HEK293 (cell line): ENCODE measurements at regions of chr6 and their contacts with region 1.

Region 1: GRCh38 chr6:37018198-37019064 is 13.0 kb downstream of the FGD2 start:
- H3K4me3 ChIP-seq: no peak overlapping the region
- H3K27ac ChIP-seq: no peak overlapping the region
- H3K4me1 ChIP-seq: peaks cover 3% of the 10 kb centered on the region; the same call in 1 of the 2 replicates
- CTCF ChIP-seq: peak; percentile 76

Region 2: DNA sequence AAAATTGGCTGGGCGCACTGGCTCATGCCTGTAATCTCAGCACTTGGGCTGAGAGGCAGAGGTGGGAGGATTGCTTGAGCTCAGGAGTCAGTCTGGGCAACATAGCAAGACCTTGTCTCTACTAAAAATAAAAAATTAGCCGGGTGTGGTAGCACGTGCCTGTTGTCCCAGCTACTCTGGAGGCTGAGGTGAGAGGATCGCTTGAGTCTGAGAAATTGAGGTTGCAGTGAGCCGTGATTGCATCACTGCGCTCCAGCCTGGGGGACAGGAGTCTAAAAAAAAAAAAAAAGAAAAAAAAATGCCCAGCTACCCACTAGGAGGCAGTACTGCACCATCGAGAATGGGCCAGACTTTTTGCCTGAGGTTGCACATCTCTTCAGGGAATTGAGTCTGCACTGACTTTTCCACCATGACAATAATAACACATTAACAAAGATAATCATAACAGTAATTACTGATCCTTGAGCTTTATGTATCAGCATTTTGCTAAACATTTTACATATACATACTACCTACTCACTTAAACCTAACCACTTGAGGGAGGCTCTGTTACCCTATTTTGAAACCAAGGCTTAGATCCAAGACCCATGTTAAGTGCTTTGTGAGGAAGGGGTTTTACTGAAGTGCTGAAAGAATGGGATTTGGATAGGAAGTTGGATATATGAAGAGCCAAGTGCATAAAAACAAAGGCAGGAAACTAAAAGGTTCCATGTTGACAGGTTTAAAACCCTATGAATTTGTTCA is 403.2 kb before region 1 on chr6:
- CTCF ChIA-PET with region 1: interaction called, 19 read pairs
- POLR2A ChIA-PET with region 1: no interaction called
- H3K4me3 ChIP-seq: no peak overlapping the region
- H3K27ac ChIP-seq: no peak overlapping the region
- H3K4me1 ChIP-seq: no peaks in the 10 kb centered on the region
- CTCF ChIP-seq: peak; percentile 83

Region 3: DNA sequence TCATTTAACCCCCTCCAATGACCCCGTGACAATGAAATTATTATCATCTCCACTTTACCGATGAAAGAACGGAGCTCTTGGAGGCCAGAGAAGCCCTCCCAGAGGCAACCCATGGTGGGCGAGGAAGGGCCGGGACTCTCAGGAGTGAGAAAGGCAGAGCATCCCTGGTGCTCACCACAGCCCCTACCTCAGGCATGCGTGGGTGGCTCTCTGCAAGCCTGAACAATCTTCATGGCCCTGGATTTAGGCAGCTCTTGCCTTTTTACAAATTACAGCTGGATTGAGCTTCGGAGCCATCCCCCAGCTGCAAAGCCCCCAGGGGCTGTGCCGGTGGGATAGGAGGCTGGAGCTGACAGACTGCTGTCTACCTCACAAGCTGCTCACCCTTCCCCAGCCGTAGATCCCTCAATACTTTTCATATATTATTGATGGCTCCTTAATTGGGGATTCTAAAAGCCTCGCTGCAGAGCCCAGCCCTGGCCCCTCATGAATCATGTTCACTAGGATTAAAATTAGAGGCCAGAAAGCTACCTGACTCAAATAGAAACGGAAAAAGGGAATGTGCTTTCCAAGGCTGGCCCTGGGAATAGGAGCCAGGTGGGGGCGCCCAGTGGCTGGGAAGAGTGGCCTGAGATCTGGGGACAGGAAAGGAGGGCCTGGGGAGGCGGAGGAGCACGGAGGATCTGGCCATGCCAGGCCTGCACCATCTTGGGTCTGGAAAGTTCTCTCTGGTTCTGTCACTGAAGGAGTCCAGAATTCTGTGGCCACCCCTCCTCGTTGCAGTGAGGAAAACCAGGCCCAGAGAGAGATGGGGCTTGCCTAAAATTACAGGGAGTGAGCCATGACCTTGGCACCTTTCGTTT is 208.3 kb before region 1 on chr6:
- CTCF ChIA-PET with region 1: interaction called, 17 read pairs
- POLR2A ChIA-PET with region 1: no interaction called
- H3K4me3 ChIP-seq: no peak overlapping the region
- H3K27ac ChIP-seq: no peak overlapping the region
- H3K4me1 ChIP-seq: no peaks in the 10 kb centered on the region
- CTCF ChIP-seq: peak; percentile 21; the same call in 1 of the 2 replicates

Region 4: DNA sequence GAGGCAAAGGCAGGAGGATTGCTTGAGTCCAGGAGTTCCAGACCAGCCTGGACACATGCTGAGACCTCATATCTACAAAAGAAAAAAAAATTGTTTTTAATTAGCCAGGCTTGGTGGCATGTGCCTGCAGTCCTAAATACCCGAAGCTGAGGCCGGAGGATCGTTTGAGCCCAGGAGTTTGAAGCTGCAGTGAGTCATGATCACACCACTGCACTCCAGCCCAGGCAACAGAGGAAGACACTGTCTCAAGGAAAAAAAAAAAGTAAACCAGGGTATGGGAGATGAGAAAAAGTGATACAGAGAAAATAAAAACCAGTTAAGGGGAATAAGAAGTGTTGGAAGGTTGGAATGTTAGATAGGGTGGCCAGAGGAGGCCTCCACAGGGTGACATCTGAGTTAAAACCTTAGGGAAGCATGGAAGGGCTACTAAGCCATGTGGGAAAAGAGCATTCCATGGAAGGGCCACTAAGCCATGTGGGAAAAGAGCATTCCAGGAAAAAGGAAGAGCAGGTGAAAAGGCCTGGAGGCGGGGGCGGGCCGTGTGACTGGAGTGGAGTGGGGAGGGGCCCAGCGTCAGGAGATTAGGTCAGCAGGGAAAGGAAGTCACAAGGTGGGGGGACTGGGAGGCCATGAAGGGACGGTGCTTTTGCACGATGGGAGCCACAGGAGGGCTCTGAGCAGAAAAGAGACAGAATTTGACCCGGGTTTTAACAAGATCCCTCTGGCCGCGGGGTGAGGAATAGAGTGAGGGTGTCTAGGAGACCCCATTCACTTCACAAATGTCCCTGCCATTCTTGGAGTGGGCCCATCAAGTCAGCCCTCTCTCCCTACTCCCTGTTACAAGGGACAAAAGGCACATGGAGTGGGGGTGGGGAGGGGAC is 197.5 kb before region 1 on chr6:
- CTCF ChIA-PET with region 1: no interaction called
- POLR2A ChIA-PET with region 1: no interaction called
- H3K4me3 ChIP-seq: no peak overlapping the region
- H3K27ac ChIP-seq: peak overlapping the region; percentile 51; the same call in 1 of the 2 replicates
- H3K4me1 ChIP-seq: peaks cover 4% of the 10 kb centered on the region
- CTCF ChIP-seq: no peak

Region 5: DNA sequence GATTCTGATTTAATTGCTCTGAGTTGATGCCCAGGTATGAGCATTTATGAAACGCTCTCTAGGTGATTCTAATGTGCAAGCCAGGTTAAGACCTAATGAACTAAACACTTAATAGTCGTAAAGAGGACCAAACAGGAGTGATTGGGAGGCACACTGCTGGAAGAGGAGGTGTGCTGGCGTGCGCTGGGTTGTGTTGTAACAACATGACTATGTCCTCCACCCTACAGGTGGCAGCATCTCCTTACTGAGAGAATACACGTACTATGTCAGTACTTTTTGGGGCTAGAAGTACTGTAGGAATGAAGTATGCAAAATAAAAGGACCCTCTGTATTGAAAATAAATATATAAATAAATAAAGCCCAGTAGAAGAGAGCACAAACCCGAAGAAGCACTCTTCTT is 120.8 kb before region 1 on chr6:
- CTCF ChIA-PET with region 1: interaction called, 22 read pairs
- POLR2A ChIA-PET with region 1: no interaction called
- H3K4me3 ChIP-seq: no peak overlapping the region
- H3K27ac ChIP-seq: no peak overlapping the region
- H3K4me1 ChIP-seq: no peaks in the 10 kb centered on the region
- CTCF ChIP-seq: no peak

Region 6: DNA sequence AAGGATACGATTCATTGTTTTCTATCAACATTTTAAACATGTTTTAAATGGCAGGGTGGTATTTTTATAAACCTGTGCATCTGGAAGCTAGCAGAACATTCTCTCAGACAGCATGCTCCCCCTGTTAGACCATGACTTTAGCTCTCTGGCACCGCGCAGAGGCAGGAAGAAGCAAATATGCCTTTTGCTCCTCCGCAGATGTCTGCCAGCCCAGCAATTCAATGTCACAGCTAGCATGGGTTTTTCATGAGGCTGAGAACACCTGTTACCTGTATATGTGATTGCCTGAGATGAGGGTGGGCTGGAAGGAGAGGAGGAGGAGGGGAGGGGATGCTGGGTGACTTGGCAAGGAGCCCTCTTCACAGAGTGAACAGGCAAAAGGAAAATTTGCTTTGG is 39.1 kb before region 1 on chr6:
- CTCF ChIA-PET with region 1: interaction called, 41 read pairs
- POLR2A ChIA-PET with region 1: no interaction called
- H3K4me3 ChIP-seq: no peak overlapping the region
- H3K27ac ChIP-seq: no peak overlapping the region
- H3K4me1 ChIP-seq: peaks cover 10% of the 10 kb centered on the region
- CTCF ChIP-seq: peak; percentile 50

Region 7: GRCh38 chr6:37029249-37029971 is 11.0 kb after region 1 on chr6:
- CTCF ChIA-PET with region 1: interaction called, 110 read pairs
- POLR2A ChIA-PET with region 1: interaction called, 3 read pairs
- H3K4me3 ChIP-seq: no peak overlapping the region
- H3K27ac ChIP-seq: no peak overlapping the region
- H3K4me1 ChIP-seq: no peaks in the 10 kb centered on the region
- CTCF ChIP-seq: peak; percentile 67

Region 8: GRCh38 chr6:37207903-37208456 is 189.5 kb after region 1 on chr6:
- CTCF ChIA-PET with region 1: interaction called, 845 read pairs
- POLR2A ChIA-PET with region 1: interaction called, 6 read pairs
- H3K4me3 ChIP-seq: no peak overlapping the region
- H3K27ac ChIP-seq: no peak overlapping the region
- H3K4me1 ChIP-seq: peaks cover 2% of the 10 kb centered on the region
- CTCF ChIP-seq: peak; percentile 85